ENCODE measurements at regions of chr1 and their contacts with region 1.

Region 1: GRCh38 chr1:20786253-20787028 is 666 bp downstream of the HP1BP3 start:
- DNase-seq: peak; percentile 97
- H3K4me3 ChIP-seq: peak overlapping the region; percentile 72 to 99 (median 92)
- H3K27ac ChIP-seq: peak overlapping the region; percentile 98 to 99 (median 99)
- H3K4me1 ChIP-seq: peaks cover 31 to 51% (median 49%) of the 10 kb centered on the region in 4 donors
- H3K27me3 ChIP-seq: no peaks in the 10 kb centered on the region
- CTCF ChIP-seq: no peak
- EP300 ChIP-seq: no peak
- POLR2A ChIP-seq: peak; percentile 11

Region 2: GRCh38 chr1:20732588-20733360 is 53.7 kb before region 1 on chr1 and contains the start of gene SH2D5:
- intact Hi-C with region 1: loop called (anchors 5 kb)
- DNase-seq: peak; percentile 97
- H3K4me3 ChIP-seq: peak within 1 kb of the TSS; percentile 63 to 86 (median 70)
- H3K27ac ChIP-seq: peak within 1 kb of the TSS; percentile 62 to 76 (median 68)
- H3K4me1 ChIP-seq: peaks cover 19 to 41% (median 30%) of the 10 kb centered on the region in 4 donors
- H3K27me3 ChIP-seq: peaks cover 0 to 40% (median 0%) of the 10 kb centered on the region in 4 donors
- CTCF ChIP-seq: peak in 2 of 3 experiments; percentile 39 to 42
- EP300 ChIP-seq: no peak
- POLR2A ChIP-seq: no peak
- total RNA-seq, gene SH2D5: 0.42 to 7.2 (median 1.7) TPM

Region 3: DNA sequence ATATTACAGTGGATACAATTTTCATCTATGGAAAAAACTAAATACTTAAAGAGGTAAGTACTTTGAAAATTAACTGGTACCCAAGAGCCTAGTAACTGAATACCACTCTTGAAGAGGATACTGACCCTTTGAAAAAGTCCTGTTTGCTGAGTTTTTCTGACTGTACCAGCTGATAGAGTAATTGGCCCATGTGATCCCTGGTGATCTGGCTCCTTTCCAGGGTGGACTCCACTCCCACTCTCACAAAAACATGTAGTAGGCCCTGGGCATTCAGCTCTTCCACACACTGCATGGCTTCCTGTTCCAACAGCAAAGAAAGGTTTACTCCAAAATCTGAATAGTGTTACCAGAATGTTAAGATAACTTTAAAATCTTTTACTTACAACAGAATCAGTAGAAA is 54.3 kb after region 1 on chr1:
- intact Hi-C with region 1: no loop called
- DNase-seq: no peak
- H3K4me3 ChIP-seq: no peak overlapping the region
- H3K27ac ChIP-seq: no peak overlapping the region
- H3K4me1 ChIP-seq: no peaks in the 10 kb centered on the region
- H3K27me3 ChIP-seq: no peaks in the 10 kb centered on the region
- CTCF ChIP-seq: no peak
- EP300 ChIP-seq: no peak
- POLR2A ChIP-seq: no peak

Region 4: GRCh38 chr1:20913242-20913641 is 126.8 kb after region 1 on chr1:
- intact Hi-C with region 1: no loop called
- DNase-seq: no peak
- H3K4me3 ChIP-seq: no peak overlapping the region
- H3K27ac ChIP-seq: no peak overlapping the region
- H3K4me1 ChIP-seq: no peaks in the 10 kb centered on the region
- H3K27me3 ChIP-seq: no peaks in the 10 kb centered on the region
- CTCF ChIP-seq: no peak
- EP300 ChIP-seq: no peak
- POLR2A ChIP-seq: no peak